Activated CD8-positive, alpha-beta T cell treated with anti-CD3 and anti-CD28 coated beads for 36 hours (primary cell): ENCODE measurements at regions of chr13 and their contacts with region 1.

Region 1: DNA sequence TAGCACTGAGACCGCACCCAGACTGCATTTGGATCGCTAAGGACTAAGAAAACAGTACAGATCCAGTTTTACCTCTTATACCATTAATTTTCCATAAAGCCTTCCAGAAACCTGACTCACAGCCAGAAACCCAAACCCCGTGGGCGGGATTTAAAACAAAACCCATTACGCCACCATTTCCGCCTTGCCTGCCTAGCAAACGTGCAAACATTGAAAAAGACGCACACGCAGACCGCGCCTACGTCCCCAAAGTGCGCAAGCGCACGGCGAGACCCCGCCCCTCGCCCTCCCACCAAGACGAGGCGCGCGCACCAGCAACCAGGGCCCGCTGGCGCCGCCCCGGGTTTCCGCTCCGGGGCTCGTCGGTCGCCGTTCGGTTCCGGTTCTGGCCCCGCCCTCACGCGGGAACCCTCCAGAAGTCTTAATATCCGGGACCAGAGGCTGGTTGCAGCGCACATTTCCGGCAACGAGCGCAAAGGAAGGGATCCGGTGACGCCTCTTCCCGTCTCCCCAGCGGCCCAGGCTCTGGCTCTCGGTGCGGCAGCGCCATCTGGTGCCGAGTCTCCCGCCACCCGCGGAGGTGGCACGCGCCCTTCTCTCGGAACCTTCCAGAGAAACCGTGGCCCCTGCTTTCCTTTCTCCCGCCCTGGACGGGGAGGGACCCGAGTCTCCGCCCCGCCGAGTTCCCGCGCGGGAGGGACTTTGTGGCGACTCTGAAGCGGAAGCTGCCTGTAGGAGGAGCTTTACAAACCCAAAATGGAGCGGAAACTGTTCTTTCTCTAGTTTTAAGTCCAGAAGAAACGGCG is 256.9 kb upstream of the STARD13 start:
- DNase-seq: peak; percentile 98
- ATAC-seq: peak; percentile 85
- H3K4me3 Mint-ChIP-seq: peak overlapping the region; percentile 81
- H3K27ac Mint-ChIP-seq: peak overlapping the region; percentile 99
- H3K4me1 Mint-ChIP-seq: peaks cover 51% of the 10 kb centered on the region
- H3K27me3 Mint-ChIP-seq: no peaks in the 10 kb centered on the region
- CTCF ChIP-seq: peak; percentile 74

Region 2: GRCh38 chr13:33228648-33229445 is 313.6 kb before region 1 on chr13:
- CTCF ChIA-PET with region 1: interaction called, 23 read pairs
- POLR2A ChIA-PET with region 1: no interaction called
- intact Hi-C with region 1: loop called (anchors 5 kb)
- DNase-seq: no peak
- ATAC-seq: peak; percentile 83
- H3K4me3 Mint-ChIP-seq: no peak overlapping the region
- H3K27ac Mint-ChIP-seq: no peak overlapping the region
- H3K4me1 Mint-ChIP-seq: peaks cover 3% of the 10 kb centered on the region
- H3K27me3 Mint-ChIP-seq: peaks cover 3% of the 10 kb centered on the region
- CTCF ChIP-seq: peak; percentile 95

Region 3: GRCh38 chr13:33446821-33447725 is 95.4 kb before region 1 on chr13:
- CTCF ChIA-PET with region 1: no interaction called
- POLR2A ChIA-PET with region 1: no interaction called
- intact Hi-C with region 1: no loop called
- DNase-seq: no peak
- ATAC-seq: no peak
- H3K4me3 Mint-ChIP-seq: no peak overlapping the region
- H3K27ac Mint-ChIP-seq: no peak overlapping the region
- H3K4me1 Mint-ChIP-seq: no peaks in the 10 kb centered on the region
- H3K27me3 Mint-ChIP-seq: peaks cover 7% of the 10 kb centered on the region
- CTCF ChIP-seq: no peak

Region 4: GRCh38 chr13:33610471-33611015 is 68.1 kb after region 1 on chr13:
- CTCF ChIA-PET with region 1: interaction called, 6 read pairs
- POLR2A ChIA-PET with region 1: no interaction called
- intact Hi-C with region 1: loop called (anchors 5 kb)
- DNase-seq: peak; percentile 73
- ATAC-seq: peak; percentile 61
- H3K4me3 Mint-ChIP-seq: peak overlapping the region; percentile 67
- H3K27ac Mint-ChIP-seq: peak overlapping the region; percentile 85
- H3K4me1 Mint-ChIP-seq: peaks cover 34% of the 10 kb centered on the region
- H3K27me3 Mint-ChIP-seq: peaks cover 7% of the 10 kb centered on the region
- CTCF ChIP-seq: no peak

Region 5: GRCh38 chr13:33740134-33740538 is 197.7 kb after region 1 on chr13:
- CTCF ChIA-PET with region 1: no interaction called
- POLR2A ChIA-PET with region 1: no interaction called
- intact Hi-C with region 1: no loop called
- DNase-seq: no peak
- ATAC-seq: no peak
- H3K4me3 Mint-ChIP-seq: no peak overlapping the region
- H3K27ac Mint-ChIP-seq: no peak overlapping the region
- H3K4me1 Mint-ChIP-seq: peaks cover 19% of the 10 kb centered on the region
- H3K27me3 Mint-ChIP-seq: no peaks in the 10 kb centered on the region
- CTCF ChIP-seq: no peak